Activated CD4-positive, alpha-beta T cell treated with anti-CD3 and anti-CD28 coated beads for 36 hours (primary cell): ENCODE measurements at regions of chr1 and their contacts with region 1.

Region 1: GRCh38 chr1:246517391-246517790 is 10.3 kb upstream of the SMYD3 start:
- DNase-seq: no peak
- ATAC-seq: no peak
- H3K4me3 Mint-ChIP-seq: no peak overlapping the region
- H3K27ac Mint-ChIP-seq: no peak overlapping the region
- H3K4me1 Mint-ChIP-seq: peaks cover 6% of the 10 kb centered on the region
- H3K27me3 Mint-ChIP-seq: no peaks in the 10 kb centered on the region

Region 2: DNA sequence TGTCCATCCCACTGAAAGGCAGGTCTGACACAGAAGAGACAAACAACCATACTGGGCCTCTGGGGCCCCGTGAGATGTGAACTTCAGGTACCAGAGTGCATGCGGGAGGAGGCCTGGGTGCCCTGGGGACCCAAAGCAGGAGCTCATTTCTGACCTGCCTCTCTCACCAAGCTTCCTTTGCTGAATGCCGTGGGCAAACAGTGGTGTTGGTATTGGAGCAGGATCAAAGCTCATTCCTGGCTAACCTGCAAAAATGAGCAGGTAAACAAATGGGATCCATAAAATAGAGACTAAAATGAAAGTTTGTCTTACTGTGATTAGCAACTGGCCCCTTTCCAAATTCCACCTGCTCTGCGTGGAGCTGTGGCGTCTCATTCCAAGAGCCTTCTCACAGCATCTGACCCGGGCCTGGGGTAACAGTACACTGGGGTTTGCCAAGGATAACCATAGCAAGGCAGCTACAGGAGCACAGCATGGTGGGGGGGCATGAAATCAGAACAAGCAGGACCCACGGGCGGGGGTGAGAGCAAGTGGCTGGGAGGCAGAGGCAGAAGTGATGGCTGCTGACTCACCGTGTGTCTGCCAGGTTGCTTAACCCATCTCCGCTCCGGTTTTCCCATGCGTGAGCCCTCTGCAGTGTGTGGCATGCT is 1259.0 kb before region 1 on chr1:
- CTCF ChIA-PET with region 1: no interaction called
- POLR2A ChIA-PET with region 1: no interaction called
- intact Hi-C with region 1: no loop called
- DNase-seq: no peak
- ATAC-seq: no peak
- H3K4me3 Mint-ChIP-seq: no peak overlapping the region
- H3K27ac Mint-ChIP-seq: no peak overlapping the region
- H3K4me1 Mint-ChIP-seq: no peaks in the 10 kb centered on the region
- H3K27me3 Mint-ChIP-seq: peaks cover 4% of the 10 kb centered on the region

Region 3: GRCh38 chr1:246544001-246544400 is 26.6 kb after region 1 on chr1:
- CTCF ChIA-PET with region 1: no interaction called
- POLR2A ChIA-PET with region 1: interaction called, 10 read pairs
- intact Hi-C with region 1: no loop called
- DNase-seq: no peak
- ATAC-seq: no peak
- H3K4me3 Mint-ChIP-seq: no peak overlapping the region
- H3K27ac Mint-ChIP-seq: no peak overlapping the region
- H3K4me1 Mint-ChIP-seq: peaks cover 3% of the 10 kb centered on the region
- H3K27me3 Mint-ChIP-seq: no peaks in the 10 kb centered on the region